ENCODE measurements at regions of chr14 and their contacts with region 1.

Region 1: DNA sequence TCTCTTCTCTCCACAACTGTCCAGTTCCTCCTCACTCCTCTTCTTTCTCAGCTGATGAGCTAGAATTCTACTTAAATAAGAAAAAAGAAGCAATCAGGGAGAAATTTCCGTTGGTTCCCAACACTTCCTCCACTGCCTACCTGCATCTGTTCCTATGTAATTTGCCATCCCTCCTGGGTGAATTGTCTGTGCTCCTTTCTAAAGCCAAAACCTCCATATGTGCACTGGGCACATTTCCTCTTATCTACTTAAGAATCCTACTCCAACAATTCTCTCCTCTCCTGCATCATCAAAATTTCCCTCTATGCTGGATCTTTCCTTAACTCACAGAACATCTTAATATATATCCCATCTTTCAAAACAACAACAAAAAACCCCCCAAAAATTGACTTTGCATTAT is 35.2 kb downstream of the GPR65 start:
- DNase-seq: no peak
- ATAC-seq: no peak
- H3K4me3 Mint-ChIP-seq: no peak overlapping the region
- H3K27ac Mint-ChIP-seq: no peak overlapping the region
- H3K4me1 Mint-ChIP-seq: peaks cover 8% of the 10 kb centered on the region
- H3K27me3 Mint-ChIP-seq: no peaks in the 10 kb centered on the region

Region 2: GRCh38 chr14:87838931-87839330 is 201.2 kb before region 1 on chr14:
- CTCF ChIA-PET with region 1: no interaction called
- POLR2A ChIA-PET with region 1: no interaction called
- DNase-seq: no peak
- ATAC-seq: no peak
- H3K4me3 Mint-ChIP-seq: no peak overlapping the region
- H3K27ac Mint-ChIP-seq: no peak overlapping the region
- H3K4me1 Mint-ChIP-seq: no peaks in the 10 kb centered on the region
- H3K27me3 Mint-ChIP-seq: peaks cover under 1% of the 10 kb centered on the region

Region 3: DNA sequence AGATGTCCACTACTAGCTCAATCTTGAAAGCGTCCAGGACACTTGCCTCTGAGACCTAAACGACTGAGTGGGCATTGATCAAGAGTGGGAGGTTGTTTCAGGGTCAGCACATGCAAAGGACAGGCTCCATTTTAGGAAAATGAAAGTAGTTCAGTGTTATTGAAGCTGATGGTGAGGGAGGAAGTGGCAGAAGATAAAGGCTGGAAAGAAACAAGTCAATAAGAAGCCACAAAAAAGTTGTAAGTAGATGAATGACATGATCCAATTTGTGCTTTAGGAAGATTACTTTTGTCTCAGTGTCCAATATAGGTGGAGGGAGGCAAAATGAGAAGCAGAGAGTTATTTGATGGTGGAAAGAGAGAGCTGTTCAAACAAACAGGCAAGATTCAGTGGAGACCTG is 13.3 kb before region 1 on chr14:
- CTCF ChIA-PET with region 1: interaction called, 13 read pairs
- POLR2A ChIA-PET with region 1: interaction called, 3 read pairs
- DNase-seq: peak; percentile 29
- ATAC-seq: peak; percentile 64
- H3K4me3 Mint-ChIP-seq: peak overlapping the region; percentile 54
- H3K27ac Mint-ChIP-seq: peak overlapping the region; percentile 94
- H3K4me1 Mint-ChIP-seq: peaks cover 84% of the 10 kb centered on the region
- H3K27me3 Mint-ChIP-seq: no peaks in the 10 kb centered on the region

Region 4: DNA sequence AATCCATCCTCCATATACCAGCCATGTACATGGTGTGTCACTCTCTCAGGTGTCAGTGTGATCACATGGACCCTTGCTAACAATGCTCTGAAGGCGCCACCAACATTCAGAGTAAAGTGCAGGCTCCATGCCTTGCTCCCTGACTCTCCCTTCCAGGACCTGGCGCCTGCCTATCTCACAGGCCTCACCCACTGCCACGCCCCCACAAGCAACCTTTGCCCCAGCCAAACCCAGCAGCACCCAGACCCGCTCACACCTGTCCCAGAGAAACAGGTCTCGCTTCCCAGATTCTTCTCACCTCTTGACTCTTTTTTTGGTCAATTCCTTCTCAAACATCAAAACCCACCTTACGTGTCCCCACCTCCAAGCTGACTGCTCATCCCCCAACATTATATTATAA is 230.6 kb after region 1 on chr14:
- CTCF ChIA-PET with region 1: no interaction called
- POLR2A ChIA-PET with region 1: no interaction called
- DNase-seq: no peak
- ATAC-seq: no peak
- H3K4me3 Mint-ChIP-seq: no peak overlapping the region
- H3K27ac Mint-ChIP-seq: no peak overlapping the region
- H3K4me1 Mint-ChIP-seq: no peaks in the 10 kb centered on the region
- H3K27me3 Mint-ChIP-seq: no peaks in the 10 kb centered on the region

Region 5: DNA sequence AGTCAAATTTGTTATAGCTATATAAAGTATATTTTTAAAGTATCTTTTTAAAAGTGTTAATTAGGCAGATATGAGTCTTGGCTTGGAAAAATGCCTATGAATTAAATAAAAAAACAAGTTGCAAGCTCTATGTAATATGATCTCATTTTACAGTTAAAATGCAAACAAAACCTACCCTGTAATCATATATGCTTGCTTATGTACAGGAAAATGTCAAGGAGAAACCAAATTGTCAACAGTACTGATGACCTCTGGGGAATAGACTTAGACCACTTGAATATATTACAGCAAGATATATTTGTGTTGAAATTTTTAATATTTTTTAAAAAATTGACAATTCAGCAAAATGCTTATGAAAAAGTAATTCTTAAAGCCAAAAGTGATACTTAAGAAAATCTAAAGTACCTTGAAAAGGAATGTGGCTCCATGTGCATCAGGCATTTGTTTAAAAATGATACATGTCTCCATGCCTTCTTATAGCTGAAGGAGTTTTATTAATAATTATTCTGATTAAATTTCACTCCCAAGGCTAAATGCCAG is 465.4 kb after region 1 on chr14:
- CTCF ChIA-PET with region 1: no interaction called
- POLR2A ChIA-PET with region 1: no interaction called
- DNase-seq: no peak
- ATAC-seq: no peak
- H3K4me3 Mint-ChIP-seq: no peak overlapping the region
- H3K27ac Mint-ChIP-seq: no peak overlapping the region
- H3K4me1 Mint-ChIP-seq: no peaks in the 10 kb centered on the region
- H3K27me3 Mint-ChIP-seq: peaks cover 20% of the 10 kb centered on the region